PC-3 (cell line): ENCODE measurements at regions of chr4 and their contacts with region 1.

Region 1: GRCh38 chr4:73127839-73128453 is 58.4 kb upstream of the COX18 start:
- DNase-seq: peak; percentile 28
- ATAC-seq: peak; percentile 91
- H3K4me3 ChIP-seq: no peak overlapping the region
- H3K27ac ChIP-seq: no peak overlapping the region
- H3K4me1 ChIP-seq: no peaks in the 10 kb centered on the region
- H3K27me3 ChIP-seq: no peaks in the 10 kb centered on the region
- CTCF ChIP-seq: peak; percentile 59

Region 2: GRCh38 chr4:73006286-73006990 is 121.5 kb before region 1 on chr4:
- CTCF ChIA-PET with region 1: no interaction called
- POLR2A ChIA-PET with region 1: no interaction called
- intact Hi-C with region 1: no loop called
- DNase-seq: no peak
- ATAC-seq: no peak
- H3K4me3 ChIP-seq: no peak overlapping the region
- H3K27ac ChIP-seq: no peak overlapping the region
- H3K4me1 ChIP-seq: no peaks in the 10 kb centered on the region
- H3K27me3 ChIP-seq: peaks cover 5% of the 10 kb centered on the region
- CTCF ChIP-seq: no peak

Region 3: GRCh38 chr4:73080789-73081188 is 47.2 kb before region 1 on chr4:
- CTCF ChIA-PET with region 1: no interaction called
- POLR2A ChIA-PET with region 1: no interaction called
- intact Hi-C with region 1: loop called (anchors 5 kb)
- DNase-seq: no peak
- ATAC-seq: no peak; the same call in 1 of the 2 replicates
- H3K4me3 ChIP-seq: no peak overlapping the region
- H3K27ac ChIP-seq: no peak overlapping the region
- H3K4me1 ChIP-seq: 0 out of 2 replicates have a peak, but pooled peaks cover 3% of the 10 kb centered on the region
- H3K27me3 ChIP-seq: no peaks in the 10 kb centered on the region
- CTCF ChIP-seq: no peak

Region 4: GRCh38 chr4:73109493-73109892 is 18.5 kb before region 1 on chr4:
- CTCF ChIA-PET with region 1: no interaction called
- POLR2A ChIA-PET with region 1: no interaction called
- intact Hi-C with region 1: loop called (anchors 2 kb)
- DNase-seq: no peak
- ATAC-seq: no peak
- H3K4me3 ChIP-seq: no peak overlapping the region
- H3K27ac ChIP-seq: no peak overlapping the region
- H3K4me1 ChIP-seq: no peaks in the 10 kb centered on the region
- H3K27me3 ChIP-seq: no peaks in the 10 kb centered on the region
- CTCF ChIP-seq: no peak

Region 5: DNA sequence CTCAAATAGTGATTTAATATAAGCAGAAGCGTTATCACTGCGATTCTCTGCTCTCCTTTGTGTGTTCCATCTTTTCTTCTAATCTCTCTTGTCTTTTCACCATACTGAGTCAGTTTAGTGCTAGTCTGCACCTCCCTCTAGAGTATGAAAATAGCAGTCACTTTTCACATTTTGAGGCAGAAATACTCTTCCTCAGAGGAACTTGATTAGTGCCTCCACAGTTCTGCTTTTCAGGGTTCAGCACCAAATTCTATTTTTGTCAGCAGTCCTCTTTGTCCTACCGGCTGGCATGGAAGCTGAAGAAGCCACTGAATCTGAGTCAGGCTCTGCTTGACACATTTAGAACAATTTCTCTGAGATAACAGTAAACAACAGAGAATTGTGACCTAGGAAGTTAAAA is 180.3 kb after region 1 on chr4:
- CTCF ChIA-PET with region 1: no interaction called
- POLR2A ChIA-PET with region 1: no interaction called
- intact Hi-C with region 1: loop called (anchors 2 kb)
- DNase-seq: peak; percentile 53
- ATAC-seq: peak; percentile 69
- H3K4me3 ChIP-seq: no peak overlapping the region
- H3K27ac ChIP-seq: no peak overlapping the region
- H3K4me1 ChIP-seq: peaks cover 11% of the 10 kb centered on the region
- H3K27me3 ChIP-seq: no peaks in the 10 kb centered on the region
- CTCF ChIP-seq: peak; percentile 60; the same call in 1 of the 2 replicates